ENCODE measurements at regions of chr19 and their contacts with region 1.

Region 1: DNA sequence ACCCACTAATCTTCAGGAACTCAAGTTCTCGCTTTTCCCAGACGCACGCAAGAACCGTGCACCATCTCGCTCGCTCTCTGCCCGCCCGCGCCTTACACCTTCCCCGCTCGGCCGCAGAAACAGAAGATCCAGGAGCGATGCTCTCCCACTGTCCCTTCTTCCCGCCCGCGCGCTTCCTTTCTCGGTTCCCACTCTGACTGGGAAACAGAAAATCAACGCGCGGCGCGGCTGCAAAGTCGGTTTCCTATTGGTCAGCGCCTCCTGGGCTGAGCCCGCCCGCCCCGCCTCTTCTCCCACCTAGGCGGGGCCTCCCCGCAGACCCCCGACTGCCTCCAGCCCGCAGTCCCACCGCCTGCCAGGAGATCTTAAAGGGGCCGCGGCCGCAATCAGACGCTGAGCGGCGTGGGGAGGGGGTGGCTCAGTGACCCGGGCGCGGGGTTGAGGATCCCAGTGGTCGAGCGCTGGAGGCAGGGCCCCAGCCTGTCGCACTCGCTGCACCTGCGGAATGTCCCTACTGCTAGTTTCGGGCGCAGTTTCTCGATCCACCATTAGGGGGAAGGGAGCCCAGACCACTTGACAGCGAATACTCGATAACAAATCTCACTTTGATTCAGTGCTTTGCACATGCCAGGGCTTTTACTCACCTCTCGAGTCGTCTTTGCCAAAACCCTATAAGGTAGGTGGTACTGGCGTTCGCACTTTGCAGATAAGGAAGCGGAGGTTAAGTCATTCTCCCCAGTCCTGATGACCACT is 685 bp upstream of the SLC25A23 start:
- DNase-seq: peak; percentile 99
- H3K4me3 ChIP-seq: peak overlapping the region; percentile 47 to 85 (median 58)
- H3K27ac ChIP-seq: peak overlapping the region; percentile 55
- H3K4me1 ChIP-seq: peaks cover 6% of the 10 kb centered on the region
- H3K27me3 ChIP-seq: no peaks in the 10 kb centered on the region
- CTCF ChIP-seq: peak; percentile 36 to 46

Region 2: GRCh38 chr19:5864725-5865486 is 595.4 kb before region 1 on chr19:
- CTCF ChIA-PET with region 1: no interaction called
- dilution Hi-C with region 1: no loop called
- in situ Hi-C with region 1: no loop called
- intact Hi-C with region 1: no loop called
- DNase-seq: no peak
- H3K4me3 ChIP-seq: no peak overlapping the region
- H3K27ac ChIP-seq: no peak overlapping the region
- H3K4me1 ChIP-seq: no peaks in the 10 kb centered on the region
- H3K27me3 ChIP-seq: peaks cover 3% of the 10 kb centered on the region
- CTCF ChIP-seq: peak; percentile 28 to 29

Region 3: GRCh38 chr19:6181119-6181518 is 279.2 kb before region 1 on chr19:
- CTCF ChIA-PET with region 1: interaction called, 18 read pairs
- dilution Hi-C with region 1: no loop called
- in situ Hi-C with region 1: no loop called
- intact Hi-C with region 1: no loop called
- DNase-seq: no peak
- H3K4me3 ChIP-seq: no peak overlapping the region
- H3K27ac ChIP-seq: no peak overlapping the region
- H3K4me1 ChIP-seq: no peaks in the 10 kb centered on the region
- H3K27me3 ChIP-seq: no peaks in the 10 kb centered on the region
- CTCF ChIP-seq: no peak

Region 4: DNA sequence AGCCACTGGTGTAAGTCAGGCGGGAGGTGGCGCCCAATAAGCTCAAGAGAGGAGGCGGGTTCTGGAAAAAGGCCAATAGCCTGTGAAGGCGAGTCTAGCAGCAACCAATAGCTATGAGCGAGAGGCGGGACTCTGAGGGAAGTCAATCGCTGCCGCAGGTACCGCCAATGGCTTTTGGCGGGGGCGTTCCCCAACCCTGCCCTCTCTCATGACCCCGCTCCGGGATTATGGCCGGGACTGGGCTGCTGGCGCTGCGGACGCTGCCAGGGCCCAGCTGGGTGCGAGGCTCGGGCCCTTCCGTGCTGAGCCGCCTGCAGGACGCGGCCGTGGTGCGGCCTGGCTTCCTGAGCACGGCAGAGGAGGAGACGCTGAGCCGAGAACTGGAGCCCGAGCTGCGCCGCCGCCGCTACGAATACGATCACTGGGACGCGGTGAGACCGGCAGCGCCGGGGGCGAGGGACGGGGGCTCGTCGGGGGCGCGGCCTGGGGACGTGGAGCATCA is 87.6 kb before region 1 on chr19 and contains the start of gene ALKBH7:
- CTCF ChIA-PET with region 1: no interaction called
- dilution Hi-C with region 1: no loop called
- in situ Hi-C with region 1: no loop called
- intact Hi-C with region 1: loop called (anchors 1 kb)
- DNase-seq: peak; percentile 99
- H3K4me3 ChIP-seq: peak within 1 kb of the TSS; percentile 85 to 95 (median 93)
- H3K27ac ChIP-seq: peak within 1 kb of the TSS; percentile 35
- H3K4me1 ChIP-seq: peaks cover 8% of the 10 kb centered on the region
- H3K27me3 ChIP-seq: no peaks in the 10 kb centered on the region
- CTCF ChIP-seq: no peak
- total RNA-seq, gene ALKBH7: 33.8 to 38.6 TPM

Region 5: GRCh38 chr19:6412447-6413091 is 47.7 kb before region 1 on chr19:
- CTCF ChIA-PET with region 1: no interaction called
- dilution Hi-C with region 1: loop called (anchors 5 kb)
- in situ Hi-C with region 1: no loop called
- intact Hi-C with region 1: no loop called
- DNase-seq: no peak
- H3K4me3 ChIP-seq: no peak overlapping the region
- H3K27ac ChIP-seq: no peak overlapping the region
- H3K4me1 ChIP-seq: no peaks in the 10 kb centered on the region
- H3K27me3 ChIP-seq: no peaks in the 10 kb centered on the region
- CTCF ChIP-seq: peak; percentile 60 to 63

Region 6: DNA sequence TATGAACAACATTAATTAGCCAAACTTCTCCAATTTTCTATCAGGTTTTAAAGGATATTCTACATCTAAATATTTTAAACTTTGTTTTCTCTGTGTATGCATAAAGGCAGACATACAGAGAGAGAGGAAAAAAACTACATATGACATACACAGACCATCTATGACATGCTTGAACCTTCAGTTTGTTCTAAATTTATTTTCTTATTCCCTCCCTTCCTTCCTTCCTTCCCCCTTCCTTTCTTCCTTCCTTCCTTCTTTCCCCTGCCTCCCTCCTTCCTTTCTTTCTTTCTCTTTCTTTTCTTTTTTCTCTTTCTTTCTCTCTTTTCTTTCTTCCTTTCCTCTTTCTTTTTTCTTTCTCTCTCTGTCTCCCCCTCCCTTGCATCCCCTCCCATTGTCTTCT is 166.5 kb after region 1 on chr19:
- CTCF ChIA-PET with region 1: no interaction called
- dilution Hi-C with region 1: loop called (anchors 10 kb)
- in situ Hi-C with region 1: no loop called
- intact Hi-C with region 1: no loop called
- DNase-seq: no peak
- H3K4me3 ChIP-seq: no peak overlapping the region
- H3K27ac ChIP-seq: no peak overlapping the region
- H3K4me1 ChIP-seq: no peaks in the 10 kb centered on the region
- H3K27me3 ChIP-seq: no peaks in the 10 kb centered on the region
- CTCF ChIP-seq: no peak